ENCODE measurements at regions of chr2 and their contacts with region 1.

Region 1: GRCh38 chr2:135531231-135532228 is at the start of gene R3HDM1:
- DNase-seq: peak; percentile 100
- H3K4me3 ChIP-seq: peak within 1 kb of the TSS; percentile 77 to 92 (median 88)
- H3K27ac ChIP-seq: peak within 1 kb of the TSS; percentile 93
- H3K4me1 ChIP-seq: peaks cover 7% of the 10 kb centered on the region
- H3K27me3 ChIP-seq: no peaks in the 10 kb centered on the region
- CTCF ChIP-seq: peak in 1 of 2 donors; percentile 15
- POLR2A ChIP-seq: peak; percentile 75
- total RNA-seq, gene R3HDM1: 36.2 and 36.6 TPM in 2 replicates

Region 2: DNA sequence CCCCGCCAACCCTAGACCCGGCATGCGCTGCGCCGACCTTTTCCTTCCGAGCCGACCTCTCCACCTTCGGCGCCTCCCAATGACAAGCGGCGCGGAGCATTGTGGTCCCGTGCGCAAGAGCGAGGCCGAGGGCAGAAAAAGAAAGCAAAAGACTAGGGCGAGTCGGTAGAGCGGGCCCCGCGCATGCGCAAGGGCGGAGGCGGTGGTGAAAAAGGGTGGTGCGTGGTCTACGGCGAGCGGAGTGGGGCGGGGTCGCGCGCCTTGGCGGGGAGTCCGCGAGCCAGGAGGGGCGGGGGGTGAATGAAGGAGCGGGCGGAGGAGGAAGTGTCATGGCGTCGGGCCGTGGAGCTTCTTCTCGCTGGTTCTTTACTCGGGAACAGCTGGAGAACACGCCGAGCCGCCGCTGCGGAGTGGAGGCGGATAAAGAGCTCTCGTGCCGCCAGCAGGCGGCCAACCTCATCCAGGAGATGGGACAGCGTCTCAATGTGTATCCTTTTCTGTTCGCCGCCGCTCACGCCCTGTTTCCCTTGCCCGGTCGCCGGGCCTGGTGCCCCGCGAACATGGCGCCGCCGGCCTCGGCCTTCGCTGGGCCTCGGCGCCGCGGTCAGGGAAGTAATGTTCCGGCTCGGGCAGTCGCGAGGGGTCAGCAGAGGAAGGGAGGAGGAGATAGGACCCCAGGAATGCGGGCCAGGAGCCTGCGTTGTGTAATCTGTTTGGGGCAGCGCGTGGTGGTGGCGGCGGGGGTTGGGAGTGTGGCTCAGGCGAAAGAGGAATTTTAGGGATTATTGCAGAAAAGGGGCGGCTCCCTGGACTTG is 612.8 kb before region 1 on chr2 and contains the start of gene CCNT2:
- CTCF ChIA-PET with region 1: no interaction called
- POLR2A ChIA-PET with region 1: no interaction called
- dilution Hi-C with region 1: no loop called
- intact Hi-C with region 1: loop called (anchors 1 kb)
- DNase-seq: peak; percentile 99
- H3K4me3 ChIP-seq: peak within 1 kb of the TSS; percentile 93 to 100 (median 100)
- H3K27ac ChIP-seq: peak within 1 kb of the TSS; percentile 91
- H3K4me1 ChIP-seq: peaks cover 17% of the 10 kb centered on the region
- H3K27me3 ChIP-seq: no peaks in the 10 kb centered on the region
- CTCF ChIP-seq: no peak
- POLR2A ChIP-seq: peak; percentile 63
- total RNA-seq, gene CCNT2: 35.4 and 35.5 TPM in 2 replicates

Region 3: GRCh38 chr2:135245055-135245454 is 286.5 kb before region 1 on chr2:
- CTCF ChIA-PET with region 1: no interaction called
- POLR2A ChIA-PET with region 1: no interaction called
- dilution Hi-C with region 1: no loop called
- intact Hi-C with region 1: loop called (anchors 5 kb)
- DNase-seq: peak; percentile 92
- H3K4me3 ChIP-seq: no peak overlapping the region
- H3K27ac ChIP-seq: peak overlapping the region; percentile 60
- H3K4me1 ChIP-seq: peaks cover 9% of the 10 kb centered on the region
- H3K27me3 ChIP-seq: no peaks in the 10 kb centered on the region
- CTCF ChIP-seq: no peak
- POLR2A ChIP-seq: no peak

Region 4: DNA sequence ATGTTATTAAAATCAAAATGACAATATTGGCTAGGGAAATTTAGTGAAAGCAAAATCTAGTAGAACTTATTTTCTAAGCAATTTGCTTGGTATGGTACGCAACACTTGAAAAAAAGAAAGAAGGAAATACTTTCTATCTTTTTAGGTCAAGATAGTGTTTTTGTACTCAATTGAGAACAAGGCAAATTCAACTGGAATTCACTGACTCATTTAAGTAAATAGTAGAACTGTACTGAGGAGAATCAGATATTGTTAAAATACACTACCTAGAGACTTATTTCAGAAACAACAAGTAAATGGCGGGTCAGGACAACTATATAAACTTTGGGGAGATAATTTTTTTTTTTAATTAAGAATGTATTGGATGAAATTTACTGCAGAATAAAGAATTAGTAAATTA is 19.4 kb before region 1 on chr2:
- CTCF ChIA-PET with region 1: no interaction called
- POLR2A ChIA-PET with region 1: no interaction called
- dilution Hi-C with region 1: no loop called
- intact Hi-C with region 1: no loop called
- DNase-seq: no peak
- H3K4me3 ChIP-seq: no peak overlapping the region
- H3K27ac ChIP-seq: no peak overlapping the region
- H3K4me1 ChIP-seq: no peaks in the 10 kb centered on the region
- H3K27me3 ChIP-seq: no peaks in the 10 kb centered on the region
- CTCF ChIP-seq: no peak
- POLR2A ChIP-seq: no peak

Region 5: GRCh38 chr2:135709992-135710391 is 178.5 kb after region 1 on chr2:
- CTCF ChIA-PET with region 1: interaction called, 14 read pairs
- POLR2A ChIA-PET with region 1: no interaction called
- dilution Hi-C with region 1: no loop called
- intact Hi-C with region 1: loop called (anchors 5 kb)
- DNase-seq: peak; percentile 60
- H3K4me3 ChIP-seq: no peak overlapping the region
- H3K27ac ChIP-seq: no peak overlapping the region
- H3K4me1 ChIP-seq: no peaks in the 10 kb centered on the region
- H3K27me3 ChIP-seq: no peaks in the 10 kb centered on the region
- CTCF ChIP-seq: peak; percentile 76 to 88
- POLR2A ChIP-seq: no peak

Region 6: GRCh38 chr2:135876066-135876711 is 344.7 kb after region 1 on chr2 and contains the start of gene MCM6:
- CTCF ChIA-PET with region 1: no interaction called
- POLR2A ChIA-PET with region 1: no interaction called
- dilution Hi-C with region 1: no loop called
- intact Hi-C with region 1: loop called (anchors 5 kb)
- DNase-seq: peak; percentile 99
- H3K4me3 ChIP-seq: peak within 1 kb of the TSS; percentile 75 to 83 (median 76)
- H3K27ac ChIP-seq: peak within 1 kb of the TSS; percentile 58
- H3K4me1 ChIP-seq: peaks cover 5% of the 10 kb centered on the region
- H3K27me3 ChIP-seq: no peaks in the 10 kb centered on the region
- CTCF ChIP-seq: no peak
- POLR2A ChIP-seq: peak; percentile 26
- total RNA-seq, gene MCM6: 48.1 and 52.6 TPM in 2 replicates

Measured in endothelial cell of umbilical vein (primary cell).